Activated CD8-positive, alpha-beta memory T cell treated with anti-CD3 and anti-CD28 coated beads, Interleukin-2, amount 10 ng/mL, durations not matched to agents 7 days and 5 days (primary cell): ENCODE measurements at regions of chr7 and their contacts with region 1.

Region 1: DNA sequence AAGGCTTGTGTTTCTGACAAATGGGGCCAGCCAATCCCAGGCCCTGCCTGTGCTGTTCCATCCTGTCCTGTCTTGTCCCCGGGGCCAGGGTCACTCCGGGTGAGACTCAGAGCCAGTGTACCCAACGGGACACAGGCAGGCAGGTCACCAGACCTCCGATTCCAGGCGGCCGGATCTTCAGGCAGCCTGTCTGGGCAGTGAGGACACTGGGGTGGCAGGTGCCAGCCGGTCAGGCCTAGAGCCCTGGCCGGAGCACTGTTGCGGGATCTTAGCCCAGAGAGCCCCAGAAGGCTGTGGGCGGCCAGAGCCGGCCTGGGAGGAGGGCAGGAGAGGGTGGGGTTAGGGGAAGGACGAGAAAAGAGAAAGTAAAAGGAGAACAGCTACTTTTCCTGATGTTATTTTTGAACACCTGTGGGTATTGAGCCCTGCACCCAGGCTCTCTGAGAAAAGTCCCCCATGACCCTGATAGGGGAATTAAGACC is 134.3 kb upstream of the TNRC18 start:
- DNase-seq: no peak
- ATAC-seq: no peak
- H3K4me3 Mint-ChIP-seq: peak overlapping the region; percentile 65
- H3K27ac Mint-ChIP-seq: peak overlapping the region; percentile 82
- H3K4me1 Mint-ChIP-seq: peaks cover 51% of the 10 kb centered on the region
- H3K27me3 Mint-ChIP-seq: peaks cover 20% of the 10 kb centered on the region

Region 2: DNA sequence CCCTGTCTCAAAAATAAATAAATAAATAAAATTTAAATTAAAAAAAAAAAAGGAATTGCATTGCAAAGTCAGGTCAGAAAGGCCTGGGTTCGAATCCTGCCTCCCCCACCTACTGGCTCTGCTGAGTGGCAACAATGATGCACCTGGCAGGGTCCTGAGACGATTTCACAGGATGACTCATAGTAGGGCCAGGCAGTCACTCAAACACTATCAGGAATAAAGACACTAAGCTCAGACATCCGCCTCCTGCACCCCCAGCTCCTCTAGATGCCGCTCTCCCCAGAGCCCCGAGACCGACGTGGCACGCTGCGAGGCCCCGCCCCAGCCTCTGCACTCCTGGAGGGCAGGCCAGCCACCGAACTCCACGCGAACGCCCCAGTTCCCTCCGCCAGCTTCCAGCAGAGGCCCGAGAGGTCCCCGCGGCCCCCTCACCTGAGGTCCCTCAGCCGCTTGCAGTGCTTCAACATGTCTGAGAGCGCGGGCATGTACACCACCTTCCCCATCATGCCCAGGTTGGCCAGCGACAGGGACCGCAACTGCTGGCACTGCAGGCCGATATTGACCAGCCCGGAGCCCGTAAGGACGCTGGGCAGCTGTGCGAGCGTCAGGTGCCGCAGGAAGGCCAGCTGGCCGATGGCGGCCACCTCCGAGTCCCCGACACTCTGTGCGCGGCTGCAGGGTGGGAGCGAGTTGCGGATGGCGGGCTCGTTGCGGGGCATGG is 57.7 kb before region 1 on chr7:
- CTCF ChIA-PET with region 1: interaction called, 14 read pairs
- DNase-seq: no peak
- ATAC-seq: no peak
- H3K4me3 Mint-ChIP-seq: no peak overlapping the region
- H3K27ac Mint-ChIP-seq: no peak overlapping the region
- H3K4me1 Mint-ChIP-seq: peaks cover 10% of the 10 kb centered on the region
- H3K27me3 Mint-ChIP-seq: no peaks in the 10 kb centered on the region

Region 3: GRCh38 chr7:5526100-5526905 is 31.7 kb before region 1 on chr7:
- CTCF ChIA-PET with region 1: interaction called, 46 read pairs
- DNase-seq: peak; percentile 69
- ATAC-seq: no peak
- H3K4me3 Mint-ChIP-seq: peak overlapping the region; percentile 98
- H3K27ac Mint-ChIP-seq: peak overlapping the region; percentile 90
- H3K4me1 Mint-ChIP-seq: peaks cover 30% of the 10 kb centered on the region
- H3K27me3 Mint-ChIP-seq: peaks cover 3% of the 10 kb centered on the region

Region 4: GRCh38 chr7:5704534-5704922 is 146.6 kb after region 1 on chr7:
- CTCF ChIA-PET with region 1: interaction called, 24 read pairs
- DNase-seq: peak; percentile 78
- ATAC-seq: no peak
- H3K4me3 Mint-ChIP-seq: no peak overlapping the region
- H3K27ac Mint-ChIP-seq: no peak overlapping the region
- H3K4me1 Mint-ChIP-seq: peaks cover 26% of the 10 kb centered on the region
- H3K27me3 Mint-ChIP-seq: no peaks in the 10 kb centered on the region

Region 5: GRCh38 chr7:5850944-5851343 is 293.0 kb after region 1 on chr7:
- CTCF ChIA-PET with region 1: no interaction called
- DNase-seq: no peak
- ATAC-seq: no peak
- H3K4me3 Mint-ChIP-seq: no peak overlapping the region
- H3K27ac Mint-ChIP-seq: no peak overlapping the region
- H3K4me1 Mint-ChIP-seq: no peaks in the 10 kb centered on the region
- H3K27me3 Mint-ChIP-seq: no peaks in the 10 kb centered on the region